Activated CD4-positive, alpha-beta T cell treated with anti-CD3 and anti-CD28 coated beads for 36 hours (primary cell): ENCODE measurements at regions of chrX and their contacts with region 1.

Region 1: DNA sequence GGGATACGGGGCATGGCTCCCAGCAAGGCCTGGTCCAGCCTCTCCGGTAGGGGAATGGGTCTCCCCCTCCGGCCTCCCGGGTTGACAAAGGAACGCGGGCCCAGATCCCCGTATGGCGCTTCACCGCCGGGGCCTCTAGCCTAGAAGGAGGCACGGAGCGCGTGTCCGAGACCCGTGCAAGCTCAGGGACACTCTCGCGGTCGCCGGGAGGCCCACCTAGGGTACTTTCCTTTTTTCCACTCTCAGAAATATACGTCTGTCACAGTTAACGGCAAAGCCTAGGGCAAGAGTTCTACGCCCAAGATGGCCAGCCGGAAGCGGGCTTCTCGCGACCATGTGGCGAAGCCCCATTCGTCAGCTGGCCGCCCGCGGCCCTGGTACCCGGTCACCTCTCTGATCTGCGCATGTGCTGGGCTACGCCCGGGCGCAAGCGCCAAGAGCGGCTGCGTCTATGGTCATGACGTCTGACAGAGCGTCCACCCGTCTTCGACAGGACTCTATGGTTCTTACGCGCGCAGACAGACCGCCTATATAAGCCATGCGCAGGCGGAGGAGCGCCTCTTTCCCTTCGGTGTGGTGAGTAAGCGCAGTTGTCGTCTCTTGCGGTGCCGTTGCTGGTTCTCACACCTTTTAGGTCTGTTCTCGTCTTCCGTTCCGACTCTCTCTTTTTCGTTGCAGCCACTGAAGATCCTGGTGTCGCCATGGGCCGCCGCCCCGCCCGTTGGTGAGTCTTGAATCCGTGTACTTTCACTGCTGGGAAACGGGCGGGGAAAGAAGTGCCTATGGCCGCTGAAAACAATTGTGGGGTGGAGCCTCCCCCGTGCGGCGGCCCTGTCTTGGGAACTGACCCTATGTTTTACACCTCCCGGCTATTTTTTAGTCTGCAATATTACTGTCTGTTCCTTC is at the start of gene RPL10:
- DNase-seq: peak; percentile 94
- ATAC-seq: peak; percentile 80
- H3K4me3 Mint-ChIP-seq: peak within 1 kb of the TSS; percentile 99
- H3K27ac Mint-ChIP-seq: peak within 1 kb of the TSS; percentile 100
- H3K4me1 Mint-ChIP-seq: no peaks in the 10 kb centered on the region
- H3K27me3 Mint-ChIP-seq: no peaks in the 10 kb centered on the region
- total RNA-seq, gene RPL10: 1,286 to 2,705 TPM

Region 2: DNA sequence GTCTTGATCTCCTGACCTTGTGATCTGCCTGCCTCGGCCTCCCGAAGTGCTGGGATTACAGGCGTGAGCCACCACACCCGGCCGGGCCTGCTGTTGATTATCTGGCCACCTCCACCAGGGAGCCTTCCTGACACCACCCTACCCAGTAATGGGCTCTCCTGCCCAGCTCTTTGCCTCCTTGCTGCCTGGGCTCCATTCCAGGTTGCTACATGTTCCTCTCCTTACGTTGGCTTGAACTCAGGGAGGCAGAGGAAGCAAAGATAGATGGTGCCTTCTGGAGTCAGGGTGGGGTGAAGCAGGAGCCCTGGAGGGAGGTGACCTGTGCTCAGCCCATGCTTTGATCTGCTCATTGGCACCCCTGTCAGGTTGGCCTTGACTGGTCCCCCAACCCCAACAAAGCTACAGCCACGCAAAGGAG is 49.9 kb before region 1 on chrX:
- CTCF ChIA-PET with region 1: no interaction called
- POLR2A ChIA-PET with region 1: no interaction called
- intact Hi-C with region 1: no loop called
- DNase-seq: no peak
- ATAC-seq: no peak
- H3K4me3 Mint-ChIP-seq: no peak overlapping the region
- H3K27ac Mint-ChIP-seq: no peak overlapping the region
- H3K4me1 Mint-ChIP-seq: peaks cover 18% of the 10 kb centered on the region
- H3K27me3 Mint-ChIP-seq: no peaks in the 10 kb centered on the region

Region 3: GRCh38 chrX:154370882-154371770 is 26.9 kb before region 1 on chrX:
- CTCF ChIA-PET with region 1: no interaction called
- POLR2A ChIA-PET with region 1: interaction called, 4 read pairs
- intact Hi-C with region 1: loop called in 1 of 2 experiments (anchors 1 kb)
- DNase-seq: peak; percentile 96
- ATAC-seq: peak; percentile 55
- H3K4me3 Mint-ChIP-seq: peak overlapping the region; percentile 86
- H3K27ac Mint-ChIP-seq: peak overlapping the region; percentile 55
- H3K4me1 Mint-ChIP-seq: peaks cover 22% of the 10 kb centered on the region
- H3K27me3 Mint-ChIP-seq: no peaks in the 10 kb centered on the region

Region 4: DNA sequence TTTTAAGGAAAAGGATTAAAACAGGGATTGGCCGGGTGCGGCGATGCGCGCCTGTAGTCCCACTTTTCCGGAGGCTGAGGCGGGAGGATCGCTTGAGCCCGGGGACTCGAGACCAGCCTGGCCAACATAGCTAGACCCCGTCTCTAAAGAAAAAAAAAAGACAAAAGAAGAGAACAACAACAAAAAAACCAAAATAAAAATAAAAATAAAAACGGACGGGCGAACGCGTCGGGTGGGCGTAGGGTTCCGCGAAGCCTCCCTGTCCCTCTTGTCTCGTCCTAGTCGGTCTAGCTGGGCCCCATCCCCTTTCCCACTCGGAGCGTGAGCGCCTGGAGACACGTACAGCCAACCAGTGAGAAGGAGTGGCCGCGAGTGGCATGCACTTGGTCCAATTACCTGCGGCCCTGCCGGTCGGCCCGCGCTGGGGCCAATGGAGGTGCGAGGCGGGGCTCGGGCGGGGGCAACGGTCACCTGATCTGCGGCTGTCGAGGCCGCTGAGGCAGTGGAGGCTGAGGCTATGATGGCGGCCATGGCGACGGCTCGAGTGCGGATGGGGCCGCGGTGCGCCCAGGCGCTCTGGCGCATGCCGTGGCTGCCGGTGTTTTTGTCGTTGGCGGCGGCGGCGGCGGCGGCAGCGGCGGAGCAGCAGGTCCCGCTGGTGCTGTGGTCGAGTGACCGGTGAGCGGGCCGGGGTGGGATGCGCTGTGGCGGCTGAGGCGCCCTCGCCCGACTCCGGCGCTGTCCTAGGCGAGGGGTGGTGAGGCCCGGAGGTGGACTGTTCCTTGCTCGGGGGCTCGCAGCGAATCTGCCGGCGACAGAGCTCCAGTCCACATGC is 30.3 kb after region 1 on chrX and contains the start of gene ATP6AP1:
- CTCF ChIA-PET with region 1: interaction called, 3 read pairs
- POLR2A ChIA-PET with region 1: no interaction called
- intact Hi-C with region 1: loop called in 1 of 2 experiments (anchors 2 kb)
- DNase-seq: peak; percentile 94
- ATAC-seq: peak; percentile 99
- H3K4me3 Mint-ChIP-seq: peak within 1 kb of the TSS; percentile 77
- H3K27ac Mint-ChIP-seq: peak within 1 kb of the TSS; percentile 65
- H3K4me1 Mint-ChIP-seq: peaks cover 26% of the 10 kb centered on the region
- H3K27me3 Mint-ChIP-seq: no peaks in the 10 kb centered on the region
- total RNA-seq, gene ATP6AP1: 25.6 to 28.6 TPM

Region 5: GRCh38 chrX:154478728-154479622 is 80.9 kb after region 1 on chrX and contains the start of gene LAGE3:
- CTCF ChIA-PET with region 1: no interaction called
- POLR2A ChIA-PET with region 1: interaction called, 4 read pairs
- intact Hi-C with region 1: loop called in 1 of 2 experiments (anchors 1 kb)
- DNase-seq: peak; percentile 97
- ATAC-seq: peak; percentile 96
- H3K4me3 Mint-ChIP-seq: peak within 1 kb of the TSS; percentile 80
- H3K27ac Mint-ChIP-seq: peak within 1 kb of the TSS; percentile 90
- H3K4me1 Mint-ChIP-seq: peaks cover 24% of the 10 kb centered on the region
- H3K27me3 Mint-ChIP-seq: no peaks in the 10 kb centered on the region
- total RNA-seq, gene LAGE3: 34.7 to 43.0 TPM

Region 6: DNA sequence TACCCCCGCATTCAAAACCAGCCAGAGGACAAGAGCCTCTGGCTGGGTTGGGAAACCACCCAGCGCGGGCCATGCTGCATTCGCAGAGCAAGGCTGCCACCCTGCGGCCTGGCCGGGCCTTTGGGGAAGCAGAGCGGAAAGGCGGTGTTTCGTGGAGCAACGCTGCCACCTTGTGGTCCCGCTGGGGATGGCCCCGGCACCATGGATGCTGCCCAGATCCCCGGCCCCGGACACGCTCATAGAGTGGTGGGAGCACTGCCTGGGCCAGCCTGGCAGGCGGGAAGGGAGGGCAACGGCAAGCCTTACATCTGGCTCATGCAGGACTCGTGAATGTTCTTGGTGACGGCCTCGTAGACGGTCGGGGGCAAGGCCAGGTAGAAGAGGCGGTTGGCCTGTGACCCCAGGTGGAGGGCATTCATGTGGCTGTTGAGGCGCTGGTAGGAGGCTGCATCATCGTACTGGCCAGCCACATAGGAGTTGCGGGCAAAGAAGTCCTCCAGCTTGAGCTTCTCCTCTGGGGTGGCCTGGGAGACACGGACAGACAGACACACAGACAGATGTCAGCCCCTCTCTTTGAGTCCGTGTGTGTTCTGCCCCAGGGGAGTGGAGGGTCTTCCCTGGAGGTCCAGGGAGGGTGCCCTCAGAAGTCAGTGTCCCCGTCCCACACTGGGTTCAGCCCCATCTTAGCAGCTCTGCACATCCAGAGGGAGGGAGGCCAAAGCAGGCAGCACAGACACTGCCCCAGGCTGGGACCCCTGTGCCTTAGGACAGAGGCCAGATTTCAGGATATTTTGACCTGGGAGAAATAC is 137.0 kb after region 1 on chrX:
- CTCF ChIA-PET with region 1: no interaction called
- POLR2A ChIA-PET with region 1: no interaction called
- intact Hi-C with region 1: loop called in 1 of 2 experiments (anchors 1 kb)
- DNase-seq: peak; percentile 93
- ATAC-seq: peak; percentile 96
- H3K4me3 Mint-ChIP-seq: no peak overlapping the region
- H3K27ac Mint-ChIP-seq: no peak overlapping the region
- H3K4me1 Mint-ChIP-seq: peaks cover 13% of the 10 kb centered on the region
- H3K27me3 Mint-ChIP-seq: no peaks in the 10 kb centered on the region